ENCODE measurements at regions of chr3 and their contacts with region 1.

Region 1: GRCh38 chr3:85576091-85576690 is 617.4 kb downstream of the CADM2 start:
- DNase-seq: peak; percentile 79
- H3K4me3 ChIP-seq: no peak overlapping the region
- H3K27ac ChIP-seq: peak overlapping the region; percentile 73
- H3K4me1 ChIP-seq: peaks cover 25% of the 10 kb centered on the region
- H3K27me3 ChIP-seq: no peaks in the 10 kb centered on the region
- CTCF ChIP-seq: peak; percentile 86

Region 2: GRCh38 chr3:84958495-84959469 is 617.4 kb before region 1 on chr3 and contains the start of gene CADM2:
- CTCF ChIA-PET with region 1: no interaction called
- POLR2A ChIA-PET with region 1: no interaction called
- intact Hi-C with region 1: loop called (anchors 5 kb)
- DNase-seq: peak; percentile 94
- H3K4me3 ChIP-seq: peak within 1 kb of the TSS; percentile 65
- H3K27ac ChIP-seq: no peak within 1 kb of the TSS
- H3K4me1 ChIP-seq: peaks cover 3% of the 10 kb centered on the region
- H3K27me3 ChIP-seq: no peaks in the 10 kb centered on the region
- CTCF ChIP-seq: no peak
- total RNA-seq, gene CADM2: 3.7 and 5.3 TPM in 2 replicates

Region 3: DNA sequence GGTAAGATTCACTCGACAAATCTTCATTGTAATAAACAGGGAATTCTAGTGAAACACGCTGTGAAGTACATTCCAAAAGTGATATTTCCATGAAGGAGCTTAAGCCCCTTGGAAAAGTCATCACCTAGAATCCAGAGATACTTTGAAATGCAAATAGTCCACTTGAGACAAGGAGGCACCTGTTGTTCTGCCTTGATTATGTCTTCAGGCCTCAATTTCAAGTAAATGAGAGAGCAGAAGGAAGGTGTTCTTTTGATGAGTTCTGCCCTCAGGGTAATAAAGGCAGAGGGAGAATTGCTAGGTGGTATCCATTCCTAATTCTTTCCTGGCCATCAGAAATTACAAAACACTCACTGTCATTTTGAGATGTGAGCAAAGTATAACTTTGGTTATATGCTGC is 455.3 kb before region 1 on chr3:
- CTCF ChIA-PET with region 1: no interaction called
- POLR2A ChIA-PET with region 1: no interaction called
- intact Hi-C with region 1: no loop called
- DNase-seq: no peak
- H3K4me3 ChIP-seq: no peak overlapping the region
- H3K27ac ChIP-seq: no peak overlapping the region
- H3K4me1 ChIP-seq: no peaks in the 10 kb centered on the region
- H3K27me3 ChIP-seq: no peaks in the 10 kb centered on the region
- CTCF ChIP-seq: no peak

Region 4: GRCh38 chr3:85427467-85427866 is 148.7 kb before region 1 on chr3:
- CTCF ChIA-PET with region 1: no interaction called
- POLR2A ChIA-PET with region 1: no interaction called
- intact Hi-C with region 1: no loop called
- DNase-seq: peak; percentile 3
- H3K4me3 ChIP-seq: no peak overlapping the region
- H3K27ac ChIP-seq: no peak overlapping the region
- H3K4me1 ChIP-seq: no peaks in the 10 kb centered on the region
- H3K27me3 ChIP-seq: no peaks in the 10 kb centered on the region
- CTCF ChIP-seq: no peak

Region 5: DNA sequence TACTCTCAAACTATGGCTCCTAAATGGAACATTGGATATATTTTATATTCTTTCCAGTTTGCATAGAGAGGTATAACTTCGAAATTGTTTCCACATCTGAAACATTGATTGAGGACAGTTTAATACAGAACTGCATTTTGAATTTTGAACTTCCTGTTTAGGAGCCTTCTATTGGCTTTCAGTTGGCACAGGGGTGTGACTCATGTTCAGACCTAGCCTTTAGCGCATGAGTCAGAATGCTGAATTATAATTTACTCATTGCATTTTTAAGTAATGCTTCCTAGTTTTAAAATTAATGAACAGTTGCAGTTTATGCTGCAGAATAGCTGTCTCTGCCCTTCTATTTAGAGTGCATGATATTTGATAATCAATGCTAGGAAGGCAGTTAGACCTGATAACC is 134.3 kb after region 1 on chr3:
- CTCF ChIA-PET with region 1: no interaction called
- POLR2A ChIA-PET with region 1: no interaction called
- intact Hi-C with region 1: no loop called
- DNase-seq: peak; percentile 1
- H3K4me3 ChIP-seq: no peak overlapping the region
- H3K27ac ChIP-seq: no peak overlapping the region
- H3K4me1 ChIP-seq: no peaks in the 10 kb centered on the region
- H3K27me3 ChIP-seq: no peaks in the 10 kb centered on the region
- CTCF ChIP-seq: no peak

Region 6: DNA sequence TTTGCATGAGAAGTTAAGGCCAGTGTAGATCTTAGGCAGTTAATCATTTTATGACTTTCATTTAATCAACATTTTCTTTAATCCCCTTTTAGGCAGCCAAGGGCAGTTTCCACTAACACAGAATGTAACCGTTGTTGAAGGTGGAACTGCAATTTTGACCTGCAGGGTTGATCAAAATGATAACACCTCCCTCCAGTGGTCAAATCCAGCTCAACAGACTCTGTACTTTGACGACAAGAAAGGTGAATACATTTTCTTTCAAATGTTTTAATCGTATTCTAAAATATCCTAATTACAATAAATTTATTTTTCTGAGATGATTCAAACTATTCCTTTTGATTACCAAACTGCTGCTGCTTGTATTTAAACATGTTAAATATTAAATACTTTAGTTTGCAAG is 225.8 kb after region 1 on chr3:
- CTCF ChIA-PET with region 1: interaction called, 4 read pairs
- POLR2A ChIA-PET with region 1: no interaction called
- intact Hi-C with region 1: loop called (anchors 5 kb)
- DNase-seq: peak; percentile 40
- H3K4me3 ChIP-seq: no peak overlapping the region
- H3K27ac ChIP-seq: no peak overlapping the region
- H3K4me1 ChIP-seq: peaks cover 5% of the 10 kb centered on the region
- H3K27me3 ChIP-seq: no peaks in the 10 kb centered on the region
- CTCF ChIP-seq: peak; percentile 54

Region 7: GRCh38 chr3:86990012-86990733 is 1414.0 kb after region 1 on chr3:
- CTCF ChIA-PET with region 1: no interaction called
- POLR2A ChIA-PET with region 1: no interaction called
- intact Hi-C with region 1: no loop called
- DNase-seq: no peak
- H3K4me3 ChIP-seq: peak overlapping the region; percentile 86
- H3K27ac ChIP-seq: peak overlapping the region; percentile 85
- H3K4me1 ChIP-seq: peaks cover 61% of the 10 kb centered on the region
- H3K27me3 ChIP-seq: no peaks in the 10 kb centered on the region
- CTCF ChIP-seq: no peak

Measured in A673 (cell line).